CD4-positive, alpha-beta T cell (primary cell): ENCODE measurements at regions of chr11 and their contacts with region 1.

Region 1: GRCh38 chr11:126062679-126063506 is at the start of gene CDON:
- DNase-seq: peak; percentile 84 to 97 (median 90)
- ATAC-seq: peak; percentile 85
- H3K4me3 ChIP-seq: peak within 1 kb of the TSS; percentile 55
- H3K4me3 Mint-ChIP-seq: peak within 1 kb of the TSS; percentile 93
- H3K27ac ChIP-seq: peak within 1 kb of the TSS; percentile 55 to 84
- H3K27ac Mint-ChIP-seq: peak within 1 kb of the TSS; percentile 85
- H3K4me1 ChIP-seq: peaks cover 13% of the 10 kb centered on the region
- H3K4me1 Mint-ChIP-seq: peaks cover 16% of the 10 kb centered on the region
- H3K27me3 ChIP-seq: peaks cover 0 to 6% of the 10 kb centered on the region in 2 experiments
- H3K27me3 Mint-ChIP-seq: peaks cover 13% of the 10 kb centered on the region
- CTCF ChIP-seq: no peak
- total RNA-seq, gene CDON: 1.9 to 2.7 TPM

Region 2: DNA sequence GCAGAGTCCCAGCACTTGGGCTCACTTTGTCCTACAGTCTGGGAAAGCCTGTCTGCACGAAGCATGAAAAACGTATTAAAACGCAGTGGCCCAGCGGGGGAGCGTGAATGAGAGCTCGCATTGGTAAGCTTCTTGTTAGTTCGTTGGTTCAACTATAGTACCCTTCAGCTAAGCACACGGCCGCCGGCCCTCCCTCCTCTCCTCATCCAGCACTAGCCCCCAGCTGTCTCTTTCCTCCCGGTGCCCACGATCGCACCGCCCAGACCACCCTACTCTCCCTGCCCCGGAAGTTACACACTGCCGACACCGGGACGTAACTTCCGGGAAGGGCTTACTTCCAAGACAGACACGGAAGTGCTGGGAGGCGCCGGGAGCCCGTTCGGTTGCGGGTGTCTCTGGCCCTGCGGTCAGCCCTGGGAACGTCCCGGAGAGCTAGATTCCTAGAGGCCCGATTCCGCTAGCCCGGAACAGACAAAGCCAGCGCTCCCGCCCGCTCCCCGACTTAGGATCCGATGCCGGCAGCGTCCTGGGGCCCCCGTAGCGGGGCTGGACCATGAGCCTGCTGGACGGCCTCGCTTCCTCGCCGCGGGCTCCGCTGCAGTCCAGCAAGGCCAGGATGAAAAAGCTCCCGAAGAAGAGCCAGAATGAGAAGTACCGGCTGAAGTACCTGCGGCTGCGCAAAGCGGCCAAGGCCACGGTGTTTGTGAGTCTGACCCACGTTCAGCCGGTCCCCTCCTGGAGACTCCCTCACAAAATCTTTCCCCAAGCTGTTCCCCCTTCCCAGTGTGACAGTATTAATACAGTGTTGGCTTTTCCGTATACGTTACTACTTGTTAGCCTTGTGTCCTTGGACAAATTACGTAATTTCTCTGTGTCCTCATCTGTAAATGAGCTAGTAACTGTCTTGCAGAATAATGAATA is 1440.1 kb before region 1 on chr11 and contains the start of gene TBRG1:
- CTCF ChIA-PET with region 1: no interaction called
- POLR2A ChIA-PET with region 1: no interaction called
- intact Hi-C with region 1: loop called in 1 of 2 experiments (anchors 10 kb)
- DNase-seq: peak; percentile 63 to 94 (median 77)
- ATAC-seq: peak; percentile 95
- H3K4me3 ChIP-seq: peak within 1 kb of the TSS; percentile 83
- H3K4me3 Mint-ChIP-seq: peak within 1 kb of the TSS; percentile 97
- H3K27ac ChIP-seq: peak within 1 kb of the TSS; percentile 88 to 90
- H3K27ac Mint-ChIP-seq: peak within 1 kb of the TSS; percentile 96
- H3K4me1 ChIP-seq: peaks cover 17% of the 10 kb centered on the region
- H3K4me1 Mint-ChIP-seq: peaks cover 49% of the 10 kb centered on the region
- H3K27me3 ChIP-seq: no peaks in the 10 kb centered on the region
- H3K27me3 Mint-ChIP-seq: peaks cover 15% of the 10 kb centered on the region
- CTCF ChIP-seq: no peak
- total RNA-seq, gene TBRG1: 62.4 to 65.9 TPM

Region 3: GRCh38 chr11:125592305-125593112 is 470.4 kb before region 1 on chr11 and contains the start of gene STT3A:
- CTCF ChIA-PET with region 1: no interaction called
- POLR2A ChIA-PET with region 1: no interaction called
- intact Hi-C with region 1: loop called in 1 of 2 experiments (anchors 10 kb)
- DNase-seq: peak; percentile 94 to 100 (median 97)
- ATAC-seq: peak; percentile 91
- H3K4me3 ChIP-seq: peak within 1 kb of the TSS; percentile 94
- H3K4me3 Mint-ChIP-seq: peak within 1 kb of the TSS; percentile 94
- H3K27ac ChIP-seq: peak within 1 kb of the TSS; percentile 94 to 98
- H3K27ac Mint-ChIP-seq: peak within 1 kb of the TSS; percentile 96
- H3K4me1 ChIP-seq: peaks cover 32% of the 10 kb centered on the region
- H3K4me1 Mint-ChIP-seq: peaks cover 46% of the 10 kb centered on the region
- H3K27me3 ChIP-seq: no peaks in the 10 kb centered on the region
- H3K27me3 Mint-ChIP-seq: no peaks in the 10 kb centered on the region
- CTCF ChIP-seq: no peak
- total RNA-seq, gene STT3A: 35.1 to 38.6 TPM

Region 4: DNA sequence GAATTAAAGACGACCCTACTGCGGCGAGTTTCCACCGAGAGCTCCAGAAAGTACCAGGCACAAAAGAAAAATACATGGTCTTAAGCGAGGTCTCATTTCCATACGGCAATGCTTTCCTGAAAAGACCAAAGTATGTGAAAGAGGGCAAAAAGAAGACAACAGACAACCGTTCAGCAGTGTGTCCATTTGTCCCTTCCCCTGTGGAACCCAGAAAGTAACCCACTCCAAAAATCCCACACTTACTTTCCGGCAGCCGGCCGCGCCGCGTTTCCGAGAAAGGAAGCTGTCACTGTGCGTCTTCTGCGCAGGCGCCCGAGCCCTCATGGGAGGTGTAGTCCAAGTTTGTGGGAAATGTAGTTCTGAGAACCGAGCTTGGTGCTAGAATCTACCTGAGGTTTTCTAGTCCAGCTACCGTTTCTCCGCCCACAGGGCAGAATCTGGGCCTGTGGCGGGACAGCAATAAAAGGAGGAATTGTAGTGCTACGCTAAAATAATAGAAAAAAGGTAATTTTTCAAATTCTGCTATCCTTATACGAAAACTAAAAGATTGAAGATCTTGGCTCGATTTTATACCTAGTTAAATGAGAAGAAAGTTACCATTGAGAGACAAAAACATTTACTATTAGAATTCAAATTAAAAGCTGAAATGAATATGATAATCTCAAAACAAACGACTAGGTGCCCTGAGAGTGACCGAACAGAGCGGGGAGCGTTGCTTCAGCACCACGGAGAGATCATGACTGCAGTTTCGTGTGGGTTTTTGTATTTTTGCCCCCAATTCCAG is 159.8 kb before region 1 on chr11 and contains the start of gene PUS3:
- CTCF ChIA-PET with region 1: no interaction called
- POLR2A ChIA-PET with region 1: interaction called, 6 read pairs
- intact Hi-C with region 1: loop called (anchors 1 to 5 kb)
- DNase-seq: peak; percentile 75 to 92 (median 84)
- ATAC-seq: peak; percentile 93
- H3K4me3 ChIP-seq: peak within 1 kb of the TSS; percentile 86
- H3K4me3 Mint-ChIP-seq: peak within 1 kb of the TSS; percentile 95
- H3K27ac ChIP-seq: peak within 1 kb of the TSS; percentile 55
- H3K27ac Mint-ChIP-seq: peak within 1 kb of the TSS; percentile 88
- H3K4me1 ChIP-seq: peaks cover 29% of the 10 kb centered on the region
- H3K4me1 Mint-ChIP-seq: peaks cover 46% of the 10 kb centered on the region
- H3K27me3 ChIP-seq: peaks cover 9 to 27% of the 10 kb centered on the region in 2 experiments
- H3K27me3 Mint-ChIP-seq: peaks cover 41% of the 10 kb centered on the region
- CTCF ChIP-seq: no peak
- total RNA-seq, gene PUS3: 6.0 to 7.3 TPM

Region 5: GRCh38 chr11:126211235-126212088 is 148.6 kb after region 1 on chr11 and contains the starts of genes FAM118B and RPUSD4:
- CTCF ChIA-PET with region 1: no interaction called
- POLR2A ChIA-PET with region 1: interaction called, 3 read pairs
- intact Hi-C with region 1: loop called (anchors 1 to 10 kb)
- DNase-seq: peak; percentile 96 to 100 (median 98)
- ATAC-seq: peak; percentile 97
- H3K4me3 ChIP-seq: peak within 1 kb of the TSS; percentile 99
- H3K4me3 Mint-ChIP-seq: peak within 1 kb of the TSS; percentile 100
- H3K27ac ChIP-seq: peak within 1 kb of the TSS; percentile 50 to 78
- H3K27ac Mint-ChIP-seq: peak within 1 kb of the TSS; percentile 93
- H3K4me1 ChIP-seq: peaks cover 21% of the 10 kb centered on the region
- H3K4me1 Mint-ChIP-seq: peaks cover 61% of the 10 kb centered on the region
- H3K27me3 ChIP-seq: no peaks in the 10 kb centered on the region
- H3K27me3 Mint-ChIP-seq: no peaks in the 10 kb centered on the region
- CTCF ChIP-seq: no peak
- total RNA-seq, gene FAM118B: 1.0 to 1.8 TPM
- total RNA-seq, gene RPUSD4: 33.1 to 37.6 TPM